ENCODE measurements at regions of chr14 and their contacts with region 1.

Region 1: DNA sequence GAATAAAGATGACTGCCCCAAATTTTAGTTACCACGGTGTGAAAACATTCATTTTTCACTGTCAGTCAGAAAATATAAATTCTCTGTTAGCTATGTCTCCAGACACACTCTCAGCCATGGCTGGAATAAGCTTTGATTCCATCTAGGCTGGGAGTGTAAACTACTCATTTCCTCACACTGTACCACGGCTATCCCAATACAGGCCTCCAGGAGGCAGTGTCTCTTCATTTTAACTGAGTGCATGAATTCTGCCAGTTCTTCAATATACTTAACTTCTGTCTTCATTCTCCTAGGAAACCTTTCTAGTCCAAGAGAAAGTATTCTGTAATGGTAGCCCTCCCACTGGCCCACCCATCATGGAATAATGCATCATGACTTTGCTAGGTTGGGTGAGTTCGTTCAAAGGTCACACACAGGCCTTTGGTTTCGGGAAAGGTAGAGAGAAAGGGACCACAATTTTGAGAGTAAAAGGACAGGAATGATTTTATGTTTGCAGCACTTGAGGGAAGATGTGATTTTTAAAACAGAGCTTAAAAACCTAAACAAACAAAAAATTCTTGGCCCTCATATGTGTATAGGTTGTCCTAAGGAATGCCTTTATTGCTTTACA is 381.1 kb downstream of the SEC23A start:
- DNase-seq: peak; percentile 63 to 84 (median 73)
- ATAC-seq: peak; percentile 90
- H3K4me3 ChIP-seq: no peak overlapping the region
- H3K27ac ChIP-seq: no peak overlapping the region
- H3K4me1 ChIP-seq: no peaks in the 10 kb centered on the region
- H3K27me3 ChIP-seq: no peaks in the 10 kb centered on the region
- CTCF ChIP-seq: peak; percentile 59 to 89 (median 78)
- POLR2A ChIP-seq: no peak

Region 2: GRCh38 chr14:38367901-38368300 is 354.0 kb before region 1 on chr14:
- intact Hi-C with region 1: no loop called
- DNase-seq: no peak
- ATAC-seq: peak; percentile 24
- H3K4me3 ChIP-seq: no peak overlapping the region
- H3K27ac ChIP-seq: no peak overlapping the region
- H3K4me1 ChIP-seq: peaks cover 7% of the 10 kb centered on the region
- H3K27me3 ChIP-seq: no peaks in the 10 kb centered on the region
- CTCF ChIP-seq: no peak
- POLR2A ChIP-seq: no peak

Region 3: GRCh38 chr14:38867561-38868150 is 145.7 kb after region 1 on chr14:
- intact Hi-C with region 1: loop called (anchors 10 kb)
- DNase-seq: peak; percentile 78 to 87 (median 83)
- ATAC-seq: peak; percentile 82
- H3K4me3 ChIP-seq: no peak overlapping the region
- H3K27ac ChIP-seq: no peak overlapping the region
- H3K4me1 ChIP-seq: peaks cover 23% of the 10 kb centered on the region
- H3K27me3 ChIP-seq: no peaks in the 10 kb centered on the region
- CTCF ChIP-seq: peak; percentile 57 to 77 (median 69)
- POLR2A ChIP-seq: no peak

Region 4: GRCh38 chr14:39015360-39015961 is 293.5 kb after region 1 on chr14:
- intact Hi-C with region 1: loop called (anchors 10 kb)
- DNase-seq: peak; percentile 31 to 50 (median 40)
- ATAC-seq: peak; percentile 58
- H3K4me3 ChIP-seq: no peak overlapping the region
- H3K27ac ChIP-seq: no peak overlapping the region
- H3K4me1 ChIP-seq: no peaks in the 10 kb centered on the region
- H3K27me3 ChIP-seq: no peaks in the 10 kb centered on the region
- CTCF ChIP-seq: peak; percentile 26 to 81 (median 69)
- POLR2A ChIP-seq: no peak